Activated CD4-positive, alpha-beta memory T cell treated with anti-CD3 and anti-CD28 coated beads for 36 hours (primary cell): ENCODE measurements at regions of chr1 and their contacts with region 1.

Region 1: DNA sequence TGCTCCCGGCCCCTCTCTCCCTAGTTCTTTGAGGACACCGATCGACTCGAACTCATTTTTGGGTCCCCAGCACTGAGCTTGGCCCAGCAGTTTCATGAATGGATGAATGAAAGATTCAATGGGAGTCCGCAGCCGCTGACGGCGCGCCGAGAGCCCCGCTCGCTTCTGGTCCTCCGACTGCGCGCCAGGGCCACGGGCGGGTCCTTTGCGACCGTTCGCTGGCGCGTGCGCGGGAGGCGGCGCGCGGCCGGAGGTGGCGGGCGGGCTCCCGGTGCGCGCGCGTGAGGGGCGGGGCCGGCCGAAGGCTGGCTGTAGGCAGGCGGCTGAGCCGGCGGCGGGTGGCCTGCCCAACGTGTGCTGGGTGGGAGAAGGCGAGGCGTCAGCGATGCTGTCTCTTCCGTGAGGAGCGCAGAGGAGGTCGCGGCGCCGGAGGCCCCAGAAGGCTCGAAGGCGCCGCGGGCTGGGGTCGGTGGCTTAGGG is at the start of gene MAST2:
- DNase-seq: peak; percentile 90
- H3K4me3 Mint-ChIP-seq: peak within 1 kb of the TSS; percentile 86
- H3K27ac Mint-ChIP-seq: peak within 1 kb of the TSS; percentile 61
- H3K4me1 Mint-ChIP-seq: peaks cover 25% of the 10 kb centered on the region
- H3K27me3 Mint-ChIP-seq: no peaks in the 10 kb centered on the region
- total RNA-seq, gene MAST2: 25.1 to 26.6 TPM

Region 2: DNA sequence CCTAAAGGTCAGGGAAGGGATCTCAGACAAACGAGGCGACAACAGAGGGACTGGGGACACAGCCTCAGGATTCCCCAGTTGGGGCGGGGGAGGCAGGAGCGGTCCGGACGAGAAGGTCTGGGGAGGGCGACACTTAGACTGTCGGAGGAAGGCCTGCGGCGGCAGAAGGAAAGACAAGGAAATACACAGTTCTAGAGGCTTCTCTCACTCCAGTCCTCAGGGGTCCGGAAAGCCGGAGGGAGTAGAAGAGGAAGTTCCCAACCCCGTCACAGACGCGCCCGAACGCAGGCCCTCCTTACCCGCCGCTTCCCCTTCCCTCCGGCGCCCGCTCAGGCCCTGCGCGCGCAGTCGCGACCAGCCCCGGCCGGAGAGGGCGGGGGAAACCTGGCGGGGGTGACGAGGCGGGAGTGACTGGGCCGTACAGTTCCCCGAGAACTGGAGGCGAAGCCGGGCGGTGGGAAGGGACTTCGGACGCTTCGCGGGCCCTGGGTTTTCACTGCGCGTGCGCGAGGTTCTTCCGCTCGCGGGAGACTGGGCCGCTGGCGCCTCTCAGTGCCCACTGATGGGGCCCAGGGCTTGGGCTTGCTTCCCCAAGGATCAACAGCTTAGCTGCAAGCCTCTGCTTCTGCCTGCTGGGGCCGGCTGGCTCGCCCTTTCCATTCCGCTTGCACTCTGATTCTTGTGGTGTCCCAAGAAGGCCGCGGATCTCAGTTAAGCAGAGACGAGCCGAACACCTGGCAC is 52.9 kb before region 1 on chr1 and contains the start of gene IPP:
- CTCF ChIA-PET with region 1: no interaction called
- POLR2A ChIA-PET with region 1: interaction called, 3 read pairs
- intact Hi-C with region 1: loop called (anchors 2 kb)
- DNase-seq: peak; percentile 97
- H3K4me3 Mint-ChIP-seq: peak within 1 kb of the TSS; percentile 91
- H3K27ac Mint-ChIP-seq: peak within 1 kb of the TSS; percentile 95
- H3K4me1 Mint-ChIP-seq: peaks cover 33% of the 10 kb centered on the region
- H3K27me3 Mint-ChIP-seq: no peaks in the 10 kb centered on the region
- total RNA-seq, gene IPP: 21.4 to 22.9 TPM

Region 3: DNA sequence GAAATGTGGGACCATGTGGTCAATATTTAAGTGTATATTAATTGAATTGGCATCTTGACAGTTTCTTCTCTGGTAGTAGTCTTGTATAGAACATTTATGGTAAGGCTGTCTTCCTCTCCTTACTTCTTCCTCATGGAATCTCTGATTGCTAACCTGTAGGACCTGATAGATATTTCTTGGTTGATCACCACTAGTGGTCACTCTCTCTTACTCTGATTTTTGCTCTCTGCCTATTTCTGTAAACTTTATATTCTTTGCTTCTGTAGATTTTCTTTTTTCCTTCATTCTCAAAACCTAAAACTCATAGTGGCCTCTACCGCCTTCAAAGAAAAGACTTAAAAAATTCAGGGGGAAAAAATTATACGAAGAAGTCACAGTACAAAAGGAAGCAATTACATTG is 21.3 kb after region 1 on chr1:
- CTCF ChIA-PET with region 1: no interaction called
- POLR2A ChIA-PET with region 1: no interaction called
- intact Hi-C with region 1: no loop called
- DNase-seq: no peak
- H3K4me3 Mint-ChIP-seq: no peak overlapping the region
- H3K27ac Mint-ChIP-seq: no peak overlapping the region
- H3K4me1 Mint-ChIP-seq: peaks cover 9% of the 10 kb centered on the region
- H3K27me3 Mint-ChIP-seq: no peaks in the 10 kb centered on the region

Region 4: GRCh38 chr1:45864167-45865106 is 61.1 kb after region 1 on chr1:
- CTCF ChIA-PET with region 1: no interaction called
- POLR2A ChIA-PET with region 1: interaction called, 3 read pairs
- intact Hi-C with region 1: loop called (anchors 10 kb)
- DNase-seq: no peak
- H3K4me3 Mint-ChIP-seq: peak overlapping the region; percentile 53
- H3K27ac Mint-ChIP-seq: peak overlapping the region; percentile 31
- H3K4me1 Mint-ChIP-seq: peaks cover 49% of the 10 kb centered on the region
- H3K27me3 Mint-ChIP-seq: no peaks in the 10 kb centered on the region

Region 5: DNA sequence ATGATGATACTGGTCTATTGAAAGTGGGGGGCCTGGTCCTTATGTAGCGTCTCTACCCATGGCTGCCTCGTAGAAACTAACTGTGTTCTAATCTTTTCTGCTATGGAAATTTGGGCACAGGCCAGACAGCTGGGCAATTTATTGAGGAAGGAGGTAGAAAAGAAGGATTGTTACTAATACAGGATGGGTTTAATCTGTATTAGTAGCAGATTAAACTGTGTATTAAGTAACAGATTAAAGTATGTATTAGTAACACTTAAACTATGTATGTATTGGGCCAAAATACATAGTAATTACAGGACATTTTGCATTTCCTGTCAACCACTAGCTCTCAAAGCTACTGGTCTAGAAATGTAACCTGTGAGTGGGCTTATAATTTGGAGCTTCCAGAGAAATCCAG is 142.1 kb after region 1 on chr1:
- CTCF ChIA-PET with region 1: no interaction called
- POLR2A ChIA-PET with region 1: no interaction called
- intact Hi-C with region 1: no loop called
- DNase-seq: no peak
- H3K4me3 Mint-ChIP-seq: no peak overlapping the region
- H3K27ac Mint-ChIP-seq: no peak overlapping the region
- H3K4me1 Mint-ChIP-seq: no peaks in the 10 kb centered on the region
- H3K27me3 Mint-ChIP-seq: no peaks in the 10 kb centered on the region

Region 6: DNA sequence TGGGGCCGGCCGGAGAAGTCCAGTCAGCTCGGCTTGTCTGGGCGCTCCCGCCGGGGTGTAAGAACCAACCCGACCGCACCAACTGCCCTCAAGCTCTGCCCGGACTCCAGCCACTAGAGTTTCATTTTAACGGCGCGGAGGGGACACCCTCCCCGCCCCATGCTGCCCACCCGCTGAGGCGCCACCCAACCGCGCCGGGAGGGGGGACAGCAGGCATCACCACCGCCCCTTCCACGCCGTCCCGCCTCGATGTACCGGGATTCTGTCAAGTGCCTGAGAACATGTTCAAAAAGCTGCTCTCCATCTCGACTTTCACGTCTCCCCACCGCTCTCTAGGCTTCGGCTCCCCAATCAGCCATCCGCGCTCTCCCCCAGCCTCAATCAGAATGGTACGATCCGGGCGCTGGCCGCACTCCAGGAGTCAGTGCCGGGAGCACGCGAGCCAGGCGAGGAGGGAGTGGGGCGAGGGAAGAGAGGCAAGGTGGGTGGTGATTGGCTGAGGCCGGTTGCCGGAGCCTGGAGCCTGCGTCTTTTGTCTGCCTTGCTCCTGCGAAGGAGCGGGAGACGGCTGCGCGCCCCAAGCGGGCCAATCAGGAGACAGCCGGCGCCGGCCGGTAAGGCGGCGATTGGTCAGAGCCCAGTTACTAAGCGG is 329.3 kb after region 1 on chr1 and contains the start of gene PIK3R3:
- CTCF ChIA-PET with region 1: no interaction called
- POLR2A ChIA-PET with region 1: no interaction called
- intact Hi-C with region 1: loop called (anchors 2 kb)
- DNase-seq: peak; percentile 94
- H3K4me3 Mint-ChIP-seq: peak within 1 kb of the TSS; percentile 92
- H3K27ac Mint-ChIP-seq: peak within 1 kb of the TSS; percentile 84
- H3K4me1 Mint-ChIP-seq: peaks cover 20% of the 10 kb centered on the region
- H3K27me3 Mint-ChIP-seq: peaks cover 31% of the 10 kb centered on the region
- total RNA-seq, gene PIK3R3: 0.65 to 0.83 TPM